Naive thymus-derived CD4-positive, alpha-beta T cell (primary cell): ENCODE measurements at regions of chr1 and their contacts with region 1.

Region 1: GRCh38 chr1:89065079-89065868 is at the start of gene GBP1:
- DNase-seq: peak in 7 of 9 donors; percentile 34 to 56 (median 52)
- ATAC-seq: peak; percentile 88
- H3K4me3 ChIP-seq: peak within 1 kb of the TSS; percentile 56
- H3K4me3 Mint-ChIP-seq: peak within 1 kb of the TSS; percentile 89 to 97 (median 94)
- H3K27ac ChIP-seq: peak within 1 kb of the TSS; percentile 89
- H3K27ac Mint-ChIP-seq: peak within 1 kb of the TSS; percentile 90 to 98 (median 95)
- H3K4me1 ChIP-seq: peaks cover 15 to 26% of the 10 kb centered on the region in 2 donors
- H3K4me1 Mint-ChIP-seq: peaks cover 44 to 74% (median 62%) of the 10 kb centered on the region in 7 donors
- H3K27me3 ChIP-seq: no peaks in the 10 kb centered on the region
- H3K27me3 Mint-ChIP-seq: no peaks in the 10 kb centered on the region
- total RNA-seq, gene GBP1: 17.1 to 319 (median 51.9) TPM

Region 2: GRCh38 chr1:88891318-88891950 is 173.8 kb before region 1 on chr1 and contains the start of gene GTF2B:
- CTCF ChIA-PET with region 1: no interaction called
- POLR2A ChIA-PET with region 1: no interaction called
- intact Hi-C with region 1: loop called in 1 of 2 experiments (anchors 1 kb)
- DNase-seq: peak; percentile 86 to 96 (median 94)
- ATAC-seq: peak; percentile 97
- H3K4me3 ChIP-seq: peak within 1 kb of the TSS; percentile 86
- H3K4me3 Mint-ChIP-seq: peak within 1 kb of the TSS; percentile 87 to 99 (median 95)
- H3K27ac ChIP-seq: peak within 1 kb of the TSS; percentile 91
- H3K27ac Mint-ChIP-seq: peak within 1 kb of the TSS; percentile 93 to 98 (median 97)
- H3K4me1 ChIP-seq: peaks cover 26 to 27% of the 10 kb centered on the region in 2 donors
- H3K4me1 Mint-ChIP-seq: peaks cover 23 to 59% (median 48%) of the 10 kb centered on the region in 7 donors
- H3K27me3 ChIP-seq: no peaks in the 10 kb centered on the region
- H3K27me3 Mint-ChIP-seq: peaks cover 0 to 2% (median 0%) of the 10 kb centered on the region in 5 donors
- total RNA-seq, gene GTF2B: 41.3 to 53.6 (median 47.3) TPM

Region 3: DNA sequence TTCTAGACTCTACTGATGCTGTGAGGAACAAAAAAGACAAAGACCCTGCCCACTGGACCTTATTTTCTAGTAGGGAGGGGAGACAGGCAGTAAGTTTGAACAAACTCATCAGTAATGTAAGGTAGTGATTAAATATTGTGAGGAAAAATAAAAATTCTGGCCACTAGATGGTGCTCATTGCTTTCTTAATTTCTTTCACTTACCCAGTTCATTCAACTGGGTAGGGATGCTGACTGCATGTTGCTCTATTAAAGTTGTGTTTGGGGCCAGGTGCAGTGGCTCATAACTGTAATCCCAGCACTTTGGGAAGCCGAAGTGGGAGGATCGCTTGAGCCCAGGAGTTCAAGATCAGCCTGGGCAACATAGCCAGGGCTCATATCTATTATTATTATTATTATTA is 66.6 kb before region 1 on chr1:
- CTCF ChIA-PET with region 1: interaction called, 13 read pairs
- POLR2A ChIA-PET with region 1: interaction called, 6 read pairs
- intact Hi-C with region 1: loop called in 1 of 2 experiments (anchors 2 kb)
- DNase-seq: peak in 7 of 9 donors; percentile 59 to 81 (median 76)
- ATAC-seq: peak; percentile 90
- H3K4me3 ChIP-seq: no peak overlapping the region
- H3K4me3 Mint-ChIP-seq: no peak overlapping the region
- H3K27ac ChIP-seq: no peak overlapping the region
- H3K27ac Mint-ChIP-seq: peak overlapping the region in 1 of 9 donors; percentile 68
- H3K4me1 ChIP-seq: peaks cover 12 to 19% of the 10 kb centered on the region in 2 donors
- H3K4me1 Mint-ChIP-seq: peaks cover 17 to 49% (median 34%) of the 10 kb centered on the region in 7 donors
- H3K27me3 ChIP-seq: no peaks in the 10 kb centered on the region
- H3K27me3 Mint-ChIP-seq: peaks cover 0 to 2% (median 0%) of the 10 kb centered on the region in 5 donors

Region 4: GRCh38 chr1:89037186-89037585 is 28.1 kb before region 1 on chr1:
- CTCF ChIA-PET with region 1: interaction called, 4 read pairs
- POLR2A ChIA-PET with region 1: interaction called, 14 read pairs
- intact Hi-C with region 1: loop called in 1 of 2 experiments (anchors 2 kb)
- DNase-seq: no peak
- ATAC-seq: no peak
- H3K4me3 ChIP-seq: no peak overlapping the region
- H3K4me3 Mint-ChIP-seq: no peak overlapping the region
- H3K27ac ChIP-seq: no peak overlapping the region
- H3K27ac Mint-ChIP-seq: no peak overlapping the region
- H3K4me1 ChIP-seq: peaks cover 19 to 20% of the 10 kb centered on the region in 2 donors
- H3K4me1 Mint-ChIP-seq: peaks cover 11 to 55% (median 43%) of the 10 kb centered on the region in 7 donors
- H3K27me3 ChIP-seq: no peaks in the 10 kb centered on the region
- H3K27me3 Mint-ChIP-seq: peaks cover 0 to 5% (median 0%) of the 10 kb centered on the region in 5 donors

Region 5: DNA sequence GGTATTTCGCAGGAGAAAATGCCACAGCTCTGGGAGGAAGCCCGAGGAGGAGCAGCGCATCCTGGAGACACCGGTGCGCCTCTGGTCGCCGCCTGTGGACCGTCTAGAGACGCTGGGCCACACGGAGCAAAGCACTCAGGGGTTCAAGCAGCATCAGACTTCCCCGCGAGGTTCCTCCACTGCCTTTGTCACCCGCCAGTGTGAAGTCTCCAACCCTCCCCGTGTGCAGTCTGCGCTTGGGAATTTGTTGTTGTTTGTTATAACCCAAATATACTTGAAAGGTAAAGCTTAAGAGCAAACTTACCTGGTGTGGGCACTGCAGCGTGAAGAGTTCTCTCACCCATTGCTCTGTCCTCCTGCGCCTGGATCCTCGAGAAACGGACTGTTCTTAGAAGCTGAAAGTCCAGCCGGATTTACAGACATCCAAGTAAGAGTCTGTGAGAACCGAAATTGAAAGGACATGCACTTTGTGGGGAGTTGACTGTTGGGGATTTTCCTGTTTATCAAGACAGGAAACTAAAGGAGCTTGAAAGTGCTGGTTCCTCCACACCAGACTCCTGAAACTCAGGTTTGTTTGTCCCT is 133.3 kb after region 1 on chr1 and contains the start of gene GBP4:
- CTCF ChIA-PET with region 1: no interaction called
- POLR2A ChIA-PET with region 1: interaction called, 3 read pairs
- intact Hi-C with region 1: loop called in 1 of 2 experiments (anchors 1 kb)
- DNase-seq: peak; percentile 25 to 49 (median 41)
- ATAC-seq: peak; percentile 73
- H3K4me3 ChIP-seq: peak within 1 kb of the TSS; percentile 92
- H3K4me3 Mint-ChIP-seq: peak within 1 kb of the TSS; percentile 91 to 99 (median 97)
- H3K27ac ChIP-seq: peak within 1 kb of the TSS; percentile 88
- H3K27ac Mint-ChIP-seq: peak within 1 kb of the TSS; percentile 91 to 99 (median 95)
- H3K4me1 ChIP-seq: peaks cover 42 to 47% of the 10 kb centered on the region in 2 donors
- H3K4me1 Mint-ChIP-seq: peaks cover 51 to 82% (median 71%) of the 10 kb centered on the region in 7 donors
- H3K27me3 ChIP-seq: no peaks in the 10 kb centered on the region
- H3K27me3 Mint-ChIP-seq: no peaks in the 10 kb centered on the region
- total RNA-seq, gene GBP4: 29.1 to 174 (median 37.4) TPM

Region 6: DNA sequence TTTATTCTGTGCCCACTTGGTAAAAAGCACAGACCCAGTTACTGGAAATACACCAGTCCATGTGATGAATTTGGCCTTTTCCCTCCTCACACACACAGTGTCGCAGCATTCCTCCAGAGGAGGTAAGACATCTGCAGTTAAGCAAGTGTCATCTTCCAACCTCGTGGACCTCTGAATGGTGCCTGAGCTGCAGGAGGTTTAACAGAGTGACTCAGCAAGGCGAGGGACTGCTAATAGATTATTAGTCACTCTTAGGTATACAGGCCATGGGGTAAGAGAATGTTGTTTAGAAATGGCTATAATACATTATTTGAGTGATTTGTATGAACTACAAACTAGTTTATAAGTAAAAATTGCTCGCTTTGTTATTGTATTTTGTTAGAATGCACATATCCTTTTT is 450.8 kb after region 1 on chr1:
- CTCF ChIA-PET with region 1: no interaction called
- POLR2A ChIA-PET with region 1: no interaction called
- intact Hi-C with region 1: no loop called
- DNase-seq: no peak
- ATAC-seq: no peak
- H3K4me3 ChIP-seq: no peak overlapping the region
- H3K4me3 Mint-ChIP-seq: no peak overlapping the region
- H3K27ac ChIP-seq: no peak overlapping the region
- H3K27ac Mint-ChIP-seq: no peak overlapping the region
- H3K4me1 ChIP-seq: no peaks in the 10 kb centered on the region
- H3K4me1 Mint-ChIP-seq: peaks cover 0 to 14% (median 0%) of the 10 kb centered on the region in 7 donors
- H3K27me3 ChIP-seq: no peaks in the 10 kb centered on the region
- H3K27me3 Mint-ChIP-seq: peaks cover 0 to 9% (median 7%) of the 10 kb centered on the region in 5 donors